ENCODE measurements at regions of chr10 and their contacts with region 1.

Region 1: GRCh38 chr10:93859049-93859655 is 34.6 kb upstream of the SLC35G1 start:
- DNase-seq: peak; percentile 26
- H3K4me3 ChIP-seq: no peak overlapping the region; a peak in 1 of 4 replicates
- H3K27ac ChIP-seq: no peak overlapping the region
- H3K4me1 ChIP-seq: peaks cover 0 to 5% of the 10 kb centered on the region in 2 experiments; a peak in 2 of 4 replicates
- H3K27me3 ChIP-seq: no peaks in the 10 kb centered on the region
- CTCF ChIP-seq: peak; percentile 65
- EP300 ChIP-seq: no peak
- RAD21 ChIP-seq: peak; percentile 80

Region 2: DNA sequence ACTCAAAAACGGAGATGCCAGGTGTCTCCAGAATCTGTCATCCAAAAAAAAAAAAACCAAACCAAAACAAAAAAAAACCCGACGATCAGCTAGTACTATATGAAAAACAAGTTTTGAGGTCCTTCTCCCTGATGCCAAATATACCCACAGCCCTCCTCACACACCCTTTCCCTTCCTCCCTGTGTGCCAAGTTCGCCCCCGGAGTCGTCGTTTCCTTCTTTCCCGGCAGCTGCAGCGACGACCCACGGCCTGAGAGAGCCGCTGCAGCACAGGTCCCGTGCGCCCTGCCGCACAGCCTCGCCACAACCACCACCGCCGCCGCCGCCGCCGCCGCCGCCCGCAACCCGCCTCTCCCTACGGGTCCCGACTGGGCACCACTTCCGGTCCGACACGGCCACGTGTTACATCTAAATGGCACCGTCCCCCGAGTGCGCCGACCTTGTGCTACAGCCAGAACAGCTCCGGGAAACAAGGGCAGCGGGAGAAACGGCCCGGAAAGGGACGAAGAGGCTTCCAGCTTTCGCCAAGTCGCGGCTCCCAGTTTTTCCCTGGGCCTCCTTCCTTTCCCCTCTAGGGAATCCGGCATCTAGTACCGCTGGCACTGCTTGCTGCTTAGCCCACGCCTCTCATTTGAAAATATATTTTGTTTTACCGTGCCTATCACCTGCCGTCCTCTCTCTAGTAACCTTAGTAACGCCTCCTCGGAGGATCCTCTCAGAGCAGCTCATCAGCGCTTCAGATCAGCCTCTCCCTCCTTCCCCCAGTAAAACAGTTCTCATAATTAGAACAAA is 156.7 kb before region 1 on chr10 and contains the start of gene FRA10AC1:
- CTCF ChIA-PET with region 1: interaction called, 38 read pairs
- POLR2A ChIA-PET with region 1: interaction called, 5 read pairs
- DNase-seq: peak; percentile 89
- H3K4me3 ChIP-seq: peak within 1 kb of the TSS; percentile 79 to 91
- H3K27ac ChIP-seq: peak within 1 kb of the TSS; percentile 86 to 99
- H3K4me1 ChIP-seq: peaks cover 0 to 4% of the 10 kb centered on the region in 2 experiments; a peak in 3 of 4 replicates
- H3K27me3 ChIP-seq: no peaks in the 10 kb centered on the region
- CTCF ChIP-seq: peak; percentile 69
- EP300 ChIP-seq: peak in 1 of 2 experiments; percentile 73; a peak in 1 of 4 replicates
- RAD21 ChIP-seq: peak; percentile 75
- polyA plus RNA-seq, gene FRA10AC1: 3.9 and 4.1 TPM in 2 replicates

Region 3: GRCh38 chr10:93726024-93726423 is 133.1 kb before region 1 on chr10:
- CTCF ChIA-PET with region 1: no interaction called
- POLR2A ChIA-PET with region 1: no interaction called
- DNase-seq: no peak
- H3K4me3 ChIP-seq: no peak overlapping the region
- H3K27ac ChIP-seq: no peak overlapping the region
- H3K4me1 ChIP-seq: no peaks in the 10 kb centered on the region
- H3K27me3 ChIP-seq: no peaks in the 10 kb centered on the region
- CTCF ChIP-seq: no peak
- EP300 ChIP-seq: no peak
- RAD21 ChIP-seq: no peak

Region 4: DNA sequence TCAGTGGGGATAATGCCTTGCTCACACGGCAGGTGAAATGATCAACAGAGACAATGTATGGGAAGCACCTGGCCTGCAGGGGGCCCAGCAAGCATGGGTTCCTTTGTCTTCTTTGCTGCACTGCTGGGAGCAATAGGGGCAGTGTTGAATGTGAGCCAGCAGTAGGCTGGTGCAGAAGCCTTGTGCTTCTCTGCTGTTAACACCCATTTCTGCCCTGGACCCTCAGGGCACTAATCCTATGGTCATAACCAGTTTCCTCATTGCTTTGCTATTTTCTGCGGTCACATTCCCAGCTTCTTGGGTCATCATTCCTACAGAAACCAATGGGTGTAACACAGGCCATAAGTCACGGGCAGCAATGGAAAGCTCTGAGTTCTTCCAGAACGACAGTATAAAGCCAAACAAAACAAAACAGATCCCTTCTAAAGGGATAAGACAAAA is 112.3 kb before region 1 on chr10:
- CTCF ChIA-PET with region 1: interaction called, 16 read pairs
- POLR2A ChIA-PET with region 1: no interaction called
- DNase-seq: no peak
- H3K4me3 ChIP-seq: no peak overlapping the region; a peak in 1 of 4 replicates
- H3K27ac ChIP-seq: peak overlapping the region in 1 of 2 experiments; percentile 68; a peak in 3 of 4 replicates
- H3K4me1 ChIP-seq: peaks cover 0 to 2% of the 10 kb centered on the region in 2 experiments; a peak in 1 of 4 replicates
- H3K27me3 ChIP-seq: no peaks in the 10 kb centered on the region
- CTCF ChIP-seq: peak; percentile 42
- EP300 ChIP-seq: peak in 1 of 2 experiments; percentile 23; a peak in 1 of 4 replicates
- RAD21 ChIP-seq: peak; percentile 31; the same call in 1 of the 2 replicates

Region 5: GRCh38 chr10:93816123-93816747 is 42.9 kb before region 1 on chr10:
- CTCF ChIA-PET with region 1: interaction called, 73 read pairs
- POLR2A ChIA-PET with region 1: no interaction called
- DNase-seq: peak; percentile 66
- H3K4me3 ChIP-seq: peak overlapping the region; percentile 24 to 50; a peak in 3 of 4 replicates
- H3K27ac ChIP-seq: peak overlapping the region in 1 of 2 experiments; percentile 95; a peak in 3 of 4 replicates
- H3K4me1 ChIP-seq: peaks cover 0 to 30% of the 10 kb centered on the region in 2 experiments; a peak in 3 of 4 replicates
- H3K27me3 ChIP-seq: no peaks in the 10 kb centered on the region
- CTCF ChIP-seq: peak; percentile 66
- EP300 ChIP-seq: peak in 1 of 2 experiments; percentile 54; a peak in 2 of 4 replicates
- RAD21 ChIP-seq: peak; percentile 58

Region 6: GRCh38 chr10:93873427-93874115 is 14.4 kb after region 1 on chr10:
- CTCF ChIA-PET with region 1: interaction called, 11 read pairs
- POLR2A ChIA-PET with region 1: no interaction called
- DNase-seq: no peak
- H3K4me3 ChIP-seq: no peak overlapping the region
- H3K27ac ChIP-seq: no peak overlapping the region
- H3K4me1 ChIP-seq: peaks cover 3 to 7% of the 10 kb centered on the region in 2 experiments; a peak in 2 of 4 replicates
- H3K27me3 ChIP-seq: no peaks in the 10 kb centered on the region
- CTCF ChIP-seq: no peak
- EP300 ChIP-seq: no peak
- RAD21 ChIP-seq: no peak

Measured in SK-N-SH (cell line).